Left cardiac atrium (tissue), 4 donors: ENCODE measurements at regions of chr4 and their contacts with region 1.

Region 1: DNA sequence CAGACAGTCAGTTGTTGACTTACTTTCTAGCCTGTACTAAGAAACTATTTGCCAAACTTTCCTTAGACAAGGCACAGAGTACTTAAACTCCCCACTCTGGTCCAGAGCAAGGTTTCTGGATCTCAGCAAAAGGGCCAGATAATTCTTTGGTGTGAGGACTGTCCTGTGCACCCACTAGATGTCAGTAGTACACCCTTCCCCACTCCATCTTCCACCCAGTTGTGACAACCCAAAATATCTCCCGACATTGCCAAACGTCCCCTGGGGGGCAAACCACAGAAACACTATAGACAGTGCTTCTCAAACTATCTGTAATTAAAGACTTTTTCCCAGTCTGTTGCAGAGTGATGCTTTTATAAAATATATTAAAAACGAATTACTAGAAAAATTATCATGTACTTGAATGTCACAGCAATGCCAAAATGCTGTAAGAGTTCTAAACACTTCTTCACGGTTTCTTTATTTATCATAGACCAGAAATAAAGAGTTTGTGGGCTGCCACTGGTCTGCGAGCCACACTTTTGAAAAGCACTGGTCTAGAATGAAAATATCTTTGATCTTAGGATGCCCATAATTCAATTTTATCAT is 203.5 kb downstream of the PRDM5 start:
- DNase-seq: peak; percentile 29
- ATAC-seq: peak; percentile 81 to 85

Region 2: GRCh38 chr4:120731561-120731960 is 12.5 kb after region 1 on chr4:
- intact Hi-C with region 1: no loop called
- DNase-seq: no peak
- ATAC-seq: peak; percentile 38 to 39

Region 3: DNA sequence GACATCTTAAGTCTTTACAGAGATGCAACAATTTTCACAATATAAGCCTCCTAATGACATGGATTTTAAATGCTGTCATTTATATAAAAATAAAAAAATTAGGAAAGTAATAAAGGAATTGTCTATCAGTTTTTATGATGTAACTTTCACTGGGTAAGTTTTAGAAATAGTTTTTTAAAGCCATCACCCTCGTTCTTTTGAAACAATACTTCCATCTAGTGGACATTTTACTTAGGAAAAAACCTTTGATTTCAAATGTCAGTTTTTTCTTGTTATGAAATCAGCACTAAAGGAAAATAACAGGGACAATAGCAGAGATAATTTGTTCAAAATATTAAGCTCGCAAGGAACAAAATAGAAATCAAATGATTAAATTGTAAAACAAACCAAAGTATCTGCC is 377.6 kb after region 1 on chr4:
- intact Hi-C with region 1: loop called in 1 of 2 experiments (anchors 2 kb)
- DNase-seq: no peak
- ATAC-seq: no peak